Head of caudate nucleus (tissue), 42 donors: ENCODE measurements at regions of chr7 and their contacts with region 1.

Region 1: GRCh38 chr7:44565097-44565794 is 8.5 kb downstream of the DDX56 start:
- DNase-seq: peak; percentile 34 to 88 (median 77)

Region 2: DNA sequence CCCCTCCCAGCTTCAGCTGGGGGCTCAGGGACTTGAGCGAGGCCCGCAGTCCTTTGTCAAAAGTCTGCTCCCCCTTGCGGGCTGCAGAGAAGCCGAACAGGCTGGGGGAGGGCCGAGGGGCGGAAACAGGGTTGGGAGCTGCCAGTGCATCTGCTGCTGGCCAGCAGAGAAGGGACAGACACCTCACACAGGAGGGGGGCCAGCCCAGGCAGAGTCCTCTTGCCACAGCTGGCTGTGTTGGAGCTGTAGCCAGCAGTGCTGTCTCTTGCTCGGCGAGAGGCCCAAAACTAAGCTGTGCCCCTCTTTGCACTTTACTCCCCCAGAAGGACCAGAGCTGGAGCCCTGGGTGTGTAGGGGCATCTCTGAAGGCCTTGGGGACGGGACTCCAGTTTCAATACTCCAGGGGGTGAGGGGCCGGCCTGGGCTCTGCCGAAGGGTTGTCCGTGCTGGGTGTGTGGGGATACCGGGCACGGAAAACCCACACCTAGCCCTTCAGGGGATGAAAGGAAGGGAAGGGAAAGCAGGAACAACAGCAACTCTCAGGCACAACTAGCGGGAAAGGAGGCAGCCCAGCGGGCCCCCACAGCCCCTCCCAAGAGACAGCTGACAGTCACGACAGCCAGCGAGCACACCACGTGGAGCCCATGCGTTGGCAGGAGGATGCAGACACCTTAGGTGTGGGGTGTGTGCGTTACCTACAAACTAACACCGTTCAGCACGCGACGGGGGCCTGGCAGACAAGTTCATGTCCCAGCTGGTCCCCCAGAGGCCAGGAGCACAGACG is 346.6 kb before region 1 on chr7:
- intact Hi-C with region 1: loop called (anchors 10 kb)
- DNase-seq: peak in 40 of 42 donors; percentile 8 to 84 (median 64)

Region 3: DNA sequence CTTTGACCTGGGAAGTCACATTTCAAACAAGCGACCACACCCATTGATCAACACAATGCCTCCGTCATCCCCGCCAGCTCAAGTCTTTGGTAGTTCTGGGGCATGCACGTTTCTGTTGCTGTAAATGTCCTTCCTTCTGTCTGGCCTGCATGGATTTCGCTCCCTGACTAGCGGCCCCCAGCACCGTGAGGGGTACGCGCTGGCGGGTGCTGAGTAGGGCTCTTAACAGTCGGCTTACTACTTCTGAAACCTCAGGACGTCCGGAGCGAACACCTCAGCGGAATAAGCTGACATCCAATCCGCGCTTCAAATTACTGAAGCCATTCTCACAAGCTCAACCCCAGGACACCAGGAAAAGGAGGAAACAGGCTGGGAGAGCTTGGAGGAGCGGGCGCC is 75.3 kb before region 1 on chr7:
- intact Hi-C with region 1: loop called (anchors 5 kb)
- DNase-seq: peak in 12 of 42 donors; percentile 11 to 47 (median 24)

Region 4: GRCh38 chr7:44615149-44615611 is 49.9 kb after region 1 on chr7:
- intact Hi-C with region 1: no loop called
- DNase-seq: no peak

Region 5: GRCh38 chr7:44713680-44714335 is 148.6 kb after region 1 on chr7:
- intact Hi-C with region 1: no loop called
- DNase-seq: peak in 1 of 42 donors; percentile 17